Activated naive CD4-positive, alpha-beta T cell treated with anti-CD3 and anti-CD28 coated beads for 36 hours (primary cell): ENCODE measurements at regions of chr6 and their contacts with region 1.

Region 1: GRCh38 chr6:139028658-139029469 is at the start of gene ABRACL:
- DNase-seq: peak; percentile 92
- H3K4me3 Mint-ChIP-seq: no peak within 1 kb of the TSS
- H3K27ac Mint-ChIP-seq: peak within 1 kb of the TSS; percentile 95
- H3K4me1 Mint-ChIP-seq: peaks cover 18% of the 10 kb centered on the region
- H3K27me3 Mint-ChIP-seq: no peaks in the 10 kb centered on the region
- total RNA-seq, gene ABRACL: 185 to 190 TPM

Region 2: DNA sequence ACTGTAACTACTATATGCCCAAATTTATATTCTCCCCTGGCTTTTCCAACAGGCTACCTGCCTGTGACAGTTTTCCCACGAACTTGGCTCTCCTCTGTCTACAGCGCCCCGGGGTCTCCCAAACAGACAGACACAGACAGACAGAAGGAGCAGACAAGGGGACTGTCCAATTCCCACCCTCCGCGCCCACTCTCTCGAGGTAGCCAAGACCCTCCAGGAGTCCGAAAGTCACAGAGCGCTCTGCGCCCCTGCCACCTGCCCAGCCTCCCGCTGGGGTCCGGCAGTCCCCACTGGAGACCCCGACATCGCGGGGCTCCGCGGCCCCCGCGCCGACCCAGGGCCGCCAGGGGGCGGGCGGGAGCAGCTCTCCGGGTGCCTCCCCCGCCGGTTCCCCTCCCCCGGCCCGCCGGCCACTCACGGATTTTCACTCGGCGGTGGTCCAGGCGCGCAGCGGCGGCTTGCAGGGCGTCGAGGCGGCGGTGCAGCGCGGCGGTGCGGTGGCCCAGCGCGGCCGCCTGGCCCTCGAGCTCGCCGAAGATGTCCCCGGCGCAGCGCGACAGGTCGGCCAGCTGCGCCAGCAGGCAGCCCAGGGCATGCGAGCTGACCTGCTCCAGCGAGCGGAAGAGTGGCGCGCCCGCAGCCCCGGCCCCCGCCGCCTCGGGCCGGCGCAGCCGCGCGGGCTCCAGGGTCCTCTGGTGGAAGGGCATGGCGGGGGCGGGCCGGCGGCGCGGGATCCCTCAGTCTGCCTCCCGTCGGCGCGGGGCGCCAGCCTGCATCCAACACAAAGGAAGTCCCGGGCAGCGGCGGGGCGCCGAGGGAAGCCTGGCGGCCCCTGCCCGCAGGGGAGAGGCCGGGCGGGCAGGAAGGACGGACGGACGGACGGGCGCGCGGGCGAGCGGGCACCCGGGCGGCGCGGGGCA is 336.5 kb before region 1 on chr6:
- CTCF ChIA-PET with region 1: interaction called, 4 read pairs
- intact Hi-C with region 1: loop called (anchors 1 kb)
- DNase-seq: peak; percentile 50
- H3K4me3 Mint-ChIP-seq: peak overlapping the region; percentile 79
- H3K27ac Mint-ChIP-seq: no peak overlapping the region
- H3K4me1 Mint-ChIP-seq: peaks cover 5% of the 10 kb centered on the region
- H3K27me3 Mint-ChIP-seq: peaks cover 32% of the 10 kb centered on the region

Region 3: DNA sequence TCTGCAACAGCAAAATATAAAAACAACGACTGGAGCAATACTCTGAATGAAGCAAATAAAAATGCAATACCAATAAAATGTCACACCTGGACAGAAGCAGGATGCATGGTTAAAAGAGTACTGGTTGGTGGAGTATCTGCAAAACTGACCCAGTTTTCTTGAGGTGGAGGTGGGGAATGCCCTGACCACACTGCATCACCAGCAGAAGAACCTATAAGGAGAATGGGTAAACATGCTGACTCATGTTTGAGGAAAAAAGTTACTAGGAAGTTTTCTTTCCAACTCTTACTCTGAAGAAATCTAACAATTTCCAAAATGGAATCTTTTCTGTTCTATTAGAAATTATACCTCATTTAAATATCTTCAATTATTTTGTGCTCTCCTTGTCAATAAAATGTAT is 84.5 kb before region 1 on chr6:
- CTCF ChIA-PET with region 1: no interaction called
- intact Hi-C with region 1: loop called (anchors 1 kb)
- DNase-seq: peak; percentile 25
- H3K4me3 Mint-ChIP-seq: no peak overlapping the region
- H3K27ac Mint-ChIP-seq: no peak overlapping the region
- H3K4me1 Mint-ChIP-seq: peaks cover 29% of the 10 kb centered on the region
- H3K27me3 Mint-ChIP-seq: no peaks in the 10 kb centered on the region

Region 4: GRCh38 chr6:139099984-139100383 is 71.1 kb after region 1 on chr6:
- CTCF ChIA-PET with region 1: no interaction called
- intact Hi-C with region 1: loop called (anchors 1 kb)
- DNase-seq: peak; percentile 63
- H3K4me3 Mint-ChIP-seq: no peak overlapping the region
- H3K27ac Mint-ChIP-seq: peak overlapping the region; percentile 66
- H3K4me1 Mint-ChIP-seq: peaks cover 26% of the 10 kb centered on the region
- H3K27me3 Mint-ChIP-seq: no peaks in the 10 kb centered on the region

Region 5: DNA sequence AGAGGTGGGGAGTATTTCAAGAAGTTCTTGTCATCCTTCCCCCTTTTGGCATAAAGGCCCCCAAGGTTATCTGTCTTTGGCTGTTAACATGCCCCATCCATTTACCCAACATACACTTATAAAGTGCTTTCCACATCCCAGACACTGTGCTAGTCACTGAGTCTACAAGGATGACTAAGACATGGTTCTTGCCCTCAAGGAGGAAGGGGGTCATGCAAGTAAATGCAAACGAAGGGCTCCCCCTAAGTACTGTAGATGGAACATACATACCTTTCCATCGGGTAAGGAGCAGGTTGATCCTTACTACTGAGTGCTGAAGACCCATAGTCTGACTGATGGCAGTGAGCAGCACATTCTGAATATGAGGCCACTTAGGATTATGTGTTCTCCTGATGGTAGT is 144.3 kb after region 1 on chr6:
- CTCF ChIA-PET with region 1: interaction called, 4 read pairs
- intact Hi-C with region 1: loop called (anchors 1 kb)
- DNase-seq: peak; percentile 46
- H3K4me3 Mint-ChIP-seq: no peak overlapping the region
- H3K27ac Mint-ChIP-seq: peak overlapping the region; percentile 85
- H3K4me1 Mint-ChIP-seq: peaks cover 88% of the 10 kb centered on the region
- H3K27me3 Mint-ChIP-seq: no peaks in the 10 kb centered on the region